Posterior vena cava (tissue), 2 donors: ENCODE measurements at regions of chr1 and their contacts with region 1.

Region 1: GRCh38 chr1:160193091-160193819 is 2.9 kb downstream of the CASQ1 start:
- DNase-seq: peak; percentile 96

Region 2: GRCh38 chr1:160221089-160221488 is 27.8 kb after region 1 on chr1:
- intact Hi-C with region 1: loop called in 1 of 2 experiments (anchors 2 kb)
- DNase-seq: no peak

Region 3: DNA sequence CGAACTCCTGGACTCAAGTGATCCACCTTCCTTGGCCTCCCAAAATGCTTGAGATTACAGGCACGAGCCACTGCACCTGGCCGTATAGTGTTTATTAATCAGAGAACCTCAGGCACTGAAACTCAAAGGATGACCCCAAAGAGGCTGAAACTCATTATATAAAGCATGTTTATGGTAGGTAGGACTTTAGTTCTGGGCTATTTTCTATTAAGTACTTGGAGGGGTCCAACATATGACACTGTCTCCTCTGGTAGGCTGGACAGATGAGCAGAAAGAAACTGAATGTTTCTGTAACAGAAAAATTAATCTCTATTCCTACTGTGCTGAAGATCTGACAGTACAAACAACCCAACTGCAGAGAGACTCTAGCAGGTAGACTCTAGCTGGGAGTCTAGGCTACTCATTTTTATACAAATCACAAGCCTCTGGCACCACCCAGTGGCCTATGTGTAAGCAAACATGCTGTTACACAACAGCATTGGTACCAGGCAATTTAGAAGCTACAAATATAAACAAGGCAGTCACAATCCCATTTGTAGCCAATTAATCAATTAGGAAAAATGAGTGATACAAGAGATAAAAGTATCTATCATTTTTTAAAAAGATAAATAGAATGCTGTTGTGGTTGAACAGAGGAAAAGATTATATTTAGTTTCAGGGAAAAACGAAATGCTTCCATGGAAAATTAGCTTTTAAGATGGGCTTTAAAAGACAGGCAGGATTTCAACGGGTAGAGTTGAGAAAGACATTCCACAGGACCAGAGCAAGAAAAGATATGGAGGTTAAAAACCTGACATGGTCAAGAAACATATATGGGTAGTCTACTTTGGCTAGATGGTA is 58.7 kb after region 1 on chr1:
- intact Hi-C with region 1: loop called (anchors 10 kb)
- DNase-seq: no peak